ENCODE measurements at regions of chr5 and their contacts with region 1.

Region 1: DNA sequence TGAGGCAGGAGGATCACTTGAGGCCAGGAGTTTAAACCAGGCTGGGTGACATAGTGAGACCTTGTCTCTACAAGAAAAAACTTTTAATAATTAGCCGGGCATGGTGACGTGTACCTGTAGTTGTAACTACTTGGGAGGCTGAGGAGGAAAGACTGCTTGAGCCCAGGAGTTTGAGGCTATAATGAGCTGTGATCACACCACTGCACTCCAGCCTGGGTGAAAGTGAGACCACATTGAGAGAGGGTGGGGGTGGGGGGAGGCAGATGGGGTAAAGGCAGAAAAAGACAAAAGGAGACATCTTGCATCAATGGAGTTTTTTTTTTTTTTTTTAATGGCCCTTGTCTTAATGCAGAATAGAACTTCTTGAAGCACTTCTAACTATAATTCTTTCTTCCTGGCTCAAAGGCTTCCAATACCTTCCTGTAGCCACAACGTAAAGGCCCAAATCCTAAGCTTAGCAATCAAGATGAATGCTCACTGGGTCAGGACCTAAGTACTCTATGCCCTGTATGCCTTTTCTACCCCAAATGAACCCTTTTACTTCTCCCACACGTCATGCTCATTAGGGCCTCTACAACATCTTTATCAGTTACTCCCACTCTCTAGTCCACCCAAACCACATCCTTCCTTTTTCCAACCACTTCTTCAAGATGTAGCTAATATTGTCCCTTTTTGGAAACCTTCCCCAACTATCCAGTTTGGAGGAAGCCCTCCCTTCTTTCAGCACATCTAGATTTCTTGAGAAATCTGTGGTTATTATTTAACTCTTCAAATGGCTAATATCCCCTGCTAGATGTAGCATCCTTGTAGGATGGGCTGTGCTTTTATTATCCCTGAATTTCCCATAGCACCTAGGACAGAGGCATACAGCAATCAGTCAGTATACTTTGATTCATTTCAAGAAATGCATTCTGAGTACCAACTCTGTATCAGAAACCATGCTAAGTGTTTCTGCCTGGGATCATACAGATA is 40.8 kb downstream of the CSF2 start:
- DNase-seq: no peak
- H3K4me3 ChIP-seq: no peak overlapping the region
- H3K27ac ChIP-seq: no peak overlapping the region
- H3K4me1 ChIP-seq: peaks cover 5% of the 10 kb centered on the region
- CTCF ChIP-seq: no peak

Region 2: DNA sequence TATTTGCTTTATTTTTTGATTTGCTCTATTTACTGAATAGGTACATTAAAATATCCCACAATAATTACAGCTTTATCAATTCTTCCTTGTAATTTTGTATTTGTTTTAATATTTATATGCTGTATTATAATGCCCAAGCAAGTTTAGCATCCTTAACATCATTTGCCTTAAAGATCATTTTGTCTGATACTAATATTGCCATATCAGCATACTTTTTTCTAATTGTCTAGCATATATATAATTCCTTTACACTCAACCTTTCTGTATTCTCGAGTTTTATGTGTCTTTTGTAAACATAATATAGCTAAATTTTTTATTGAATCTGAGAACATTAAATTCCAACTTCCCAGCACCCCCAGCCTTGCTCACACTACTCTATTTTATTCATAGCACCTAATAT is 48.5 kb after region 1 on chr5:
- CTCF ChIA-PET with region 1: no interaction called
- POLR2A ChIA-PET with region 1: no interaction called
- intact Hi-C with region 1: loop called (anchors 5 kb)
- DNase-seq: no peak
- H3K4me3 ChIP-seq: no peak overlapping the region
- H3K27ac ChIP-seq: no peak overlapping the region
- H3K4me1 ChIP-seq: no peaks in the 10 kb centered on the region
- CTCF ChIP-seq: no peak

Measured in OCI-LY7 (cell line).